GM12878 (cell line): ENCODE measurements at regions of chr14 and their contacts with region 1.

Region 1: GRCh38 chr14:60331201-60332045 is 82.4 kb downstream of the PPM1A start:
- DNase-seq: peak; percentile 52
- ATAC-seq: peak; percentile 80
- H3K4me3 ChIP-seq: peak overlapping the region; percentile 69
- H3K27ac ChIP-seq: peak overlapping the region; percentile 84
- H3K4me1 ChIP-seq: peaks cover 11% of the 10 kb centered on the region
- H3K27me3 ChIP-seq: no peaks in the 10 kb centered on the region
- CTCF ChIP-seq: peak; percentile 71 to 91 (median 84)
- EP300 ChIP-seq: no peak
- POLR2A ChIP-seq: peak; percentile 65
- RAD21 ChIP-seq: peak; percentile 68

Region 2: DNA sequence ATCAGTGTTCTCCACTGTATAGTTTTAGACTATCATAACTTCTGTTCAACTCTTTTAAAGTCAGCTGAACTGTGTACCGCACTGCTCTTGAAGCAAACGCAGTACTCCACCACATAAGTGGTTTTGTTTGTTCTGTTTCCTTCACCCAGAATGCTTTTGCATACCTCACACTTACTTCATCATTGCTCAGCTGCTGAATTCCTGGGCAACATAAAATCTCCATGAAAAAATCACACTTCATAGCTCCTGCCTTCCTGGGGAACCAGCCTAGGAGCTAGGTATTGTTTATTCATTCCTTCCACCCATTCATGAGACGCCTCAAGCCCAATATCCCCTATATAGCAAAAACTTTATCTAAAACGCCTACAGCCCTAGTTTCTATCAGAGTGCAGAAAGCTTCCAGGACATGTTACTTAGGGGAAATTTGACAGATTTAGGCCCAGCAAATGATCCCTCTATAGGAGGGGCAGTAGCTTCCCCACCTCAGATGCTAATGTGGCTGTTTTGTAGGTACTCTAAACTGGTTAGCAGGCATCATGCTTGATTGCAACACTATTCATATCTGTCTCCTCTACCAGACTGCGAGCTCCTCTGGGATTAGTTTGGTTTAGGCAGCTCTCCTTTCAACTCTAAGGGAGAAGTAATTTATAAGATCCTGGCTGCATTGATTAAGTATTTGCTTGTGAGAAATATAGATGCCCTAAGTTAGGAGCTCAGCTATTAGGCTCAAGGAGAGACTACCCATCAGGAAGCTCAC is 367.0 kb before region 1 on chr14:
- CTCF ChIA-PET with region 1: interaction called, 10 read pairs
- POLR2A ChIA-PET with region 1: no interaction called
- RAD21 ChIA-PET with region 1: interaction called, 4 read pairs
- SMC1A ChIA-PET with region 1: interaction called, 5 read pairs
- in situ Hi-C with region 1: loop called (anchors 10 kb)
- intact Hi-C with region 1: loop called (anchors 10 kb)
- DNase-seq: no peak
- ATAC-seq: peak; percentile 42
- H3K4me3 ChIP-seq: 0 out of 2 replicates have a peak overlapping the region, but pooled peaks have one; percentile 6
- H3K27ac ChIP-seq: peak overlapping the region; percentile 47
- H3K4me1 ChIP-seq: peaks cover 6% of the 10 kb centered on the region; the same call in 1 of the 2 replicates
- H3K27me3 ChIP-seq: no peaks in the 10 kb centered on the region
- CTCF ChIP-seq: no peak
- EP300 ChIP-seq: no peak
- POLR2A ChIP-seq: no peak
- RAD21 ChIP-seq: no peak

Region 3: GRCh38 chr14:60195179-60195810 is 136.1 kb before region 1 on chr14:
- CTCF ChIA-PET with region 1: interaction called, 231 read pairs
- POLR2A ChIA-PET with region 1: interaction called, 7 read pairs
- RAD21 ChIA-PET with region 1: interaction called, 30 read pairs
- SMC1A ChIA-PET with region 1: interaction called, 151 read pairs
- in situ Hi-C with region 1: no loop called
- intact Hi-C with region 1: loop called (anchors 2 kb)
- DNase-seq: no peak
- ATAC-seq: peak; percentile 88
- H3K4me3 ChIP-seq: no peak overlapping the region
- H3K27ac ChIP-seq: no peak overlapping the region
- H3K4me1 ChIP-seq: peaks cover 10% of the 10 kb centered on the region
- H3K27me3 ChIP-seq: no peaks in the 10 kb centered on the region
- CTCF ChIP-seq: peak; percentile 50 to 70 (median 59); a peak in 5 of 6 replicates
- EP300 ChIP-seq: no peak
- POLR2A ChIP-seq: no peak
- RAD21 ChIP-seq: peak; percentile 91

Region 4: DNA sequence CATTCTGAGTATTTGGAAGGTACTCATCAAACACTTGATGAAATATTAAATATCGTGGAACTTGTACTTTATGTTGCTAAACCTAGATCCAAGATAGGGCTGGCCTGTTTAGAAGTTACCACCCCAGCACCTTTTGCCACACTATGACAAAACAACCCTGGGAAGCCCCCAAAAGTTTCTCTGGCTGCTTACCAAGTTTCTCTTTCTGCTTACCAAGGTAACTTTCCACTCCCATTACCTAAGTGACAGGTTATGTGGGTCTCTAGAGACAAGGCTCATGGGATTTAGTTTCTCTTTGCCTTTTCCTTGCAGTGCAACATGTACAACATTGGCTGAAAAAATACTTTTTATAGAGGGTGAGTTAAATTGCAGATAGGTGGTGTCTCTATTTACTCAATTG is 111.3 kb before region 1 on chr14:
- CTCF ChIA-PET with region 1: interaction called, 18 read pairs
- POLR2A ChIA-PET with region 1: interaction called, 3 read pairs
- RAD21 ChIA-PET with region 1: interaction called, 72 read pairs
- SMC1A ChIA-PET with region 1: interaction called, 8 read pairs
- in situ Hi-C with region 1: no loop called
- intact Hi-C with region 1: no loop called
- DNase-seq: peak; percentile 82
- ATAC-seq: peak; percentile 72
- H3K4me3 ChIP-seq: no peak overlapping the region
- H3K27ac ChIP-seq: peak overlapping the region; percentile 49
- H3K4me1 ChIP-seq: peaks cover 28% of the 10 kb centered on the region
- H3K27me3 ChIP-seq: no peaks in the 10 kb centered on the region
- CTCF ChIP-seq: no peak
- EP300 ChIP-seq: no peak
- POLR2A ChIP-seq: no peak
- RAD21 ChIP-seq: no peak

Region 5: GRCh38 chr14:60266021-60266937 is 65.1 kb before region 1 on chr14:
- CTCF ChIA-PET with region 1: interaction called, 16 read pairs
- POLR2A ChIA-PET with region 1: no interaction called
- RAD21 ChIA-PET with region 1: interaction called, 4 read pairs
- SMC1A ChIA-PET with region 1: interaction called, 5 read pairs
- in situ Hi-C with region 1: no loop called
- intact Hi-C with region 1: no loop called
- DNase-seq: no peak
- ATAC-seq: peak; percentile 46; the same call in 2 of the 3 replicates
- H3K4me3 ChIP-seq: no peak overlapping the region
- H3K27ac ChIP-seq: no peak overlapping the region
- H3K4me1 ChIP-seq: no peaks in the 10 kb centered on the region
- H3K27me3 ChIP-seq: no peaks in the 10 kb centered on the region
- CTCF ChIP-seq: peak; percentile 1 to 22 (median 14); a peak in 1 of 6 replicates
- EP300 ChIP-seq: no peak
- POLR2A ChIP-seq: no peak
- RAD21 ChIP-seq: no peak

Region 6: DNA sequence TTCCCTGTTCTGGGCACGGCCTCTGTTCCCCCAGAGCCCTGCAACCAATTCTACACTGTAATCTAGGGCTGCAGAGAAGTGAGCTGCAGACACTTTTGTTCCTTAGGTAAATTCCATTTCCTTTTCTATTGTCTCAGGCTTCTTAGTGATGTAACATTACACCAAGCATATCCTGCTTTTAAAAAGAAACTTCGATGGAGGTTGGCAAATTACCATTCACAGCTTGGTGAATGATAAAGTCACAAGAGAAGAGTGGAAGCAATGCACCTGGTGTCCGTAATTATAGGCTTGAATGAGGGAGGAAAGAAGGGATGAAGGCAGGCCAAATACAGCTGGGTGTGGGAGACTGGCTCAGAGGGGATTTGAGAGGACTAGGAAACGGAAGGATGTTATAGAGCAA is 13.8 kb before region 1 on chr14:
- CTCF ChIA-PET with region 1: interaction called, 10 read pairs
- POLR2A ChIA-PET with region 1: no interaction called
- RAD21 ChIA-PET with region 1: no interaction called
- SMC1A ChIA-PET with region 1: interaction called, 3 read pairs
- in situ Hi-C with region 1: no loop called
- intact Hi-C with region 1: no loop called
- DNase-seq: no peak
- ATAC-seq: no peak
- H3K4me3 ChIP-seq: no peak overlapping the region
- H3K27ac ChIP-seq: no peak overlapping the region
- H3K4me1 ChIP-seq: no peaks in the 10 kb centered on the region
- H3K27me3 ChIP-seq: no peaks in the 10 kb centered on the region
- CTCF ChIP-seq: no peak
- EP300 ChIP-seq: no peak
- POLR2A ChIP-seq: no peak
- RAD21 ChIP-seq: no peak

Region 7: GRCh38 chr14:60420050-60420449 is 88.6 kb after region 1 on chr14:
- CTCF ChIA-PET with region 1: no interaction called
- POLR2A ChIA-PET with region 1: no interaction called
- RAD21 ChIA-PET with region 1: no interaction called
- SMC1A ChIA-PET with region 1: no interaction called
- in situ Hi-C with region 1: no loop called
- intact Hi-C with region 1: no loop called
- DNase-seq: no peak
- ATAC-seq: no peak
- H3K4me3 ChIP-seq: no peak overlapping the region
- H3K27ac ChIP-seq: no peak overlapping the region
- H3K4me1 ChIP-seq: no peaks in the 10 kb centered on the region
- H3K27me3 ChIP-seq: no peaks in the 10 kb centered on the region
- CTCF ChIP-seq: no peak
- EP300 ChIP-seq: no peak
- POLR2A ChIP-seq: no peak
- RAD21 ChIP-seq: no peak